Endothelial cell of umbilical vein (primary cell): ENCODE measurements at regions of chr2 and their contacts with region 1.

Region 1: DNA sequence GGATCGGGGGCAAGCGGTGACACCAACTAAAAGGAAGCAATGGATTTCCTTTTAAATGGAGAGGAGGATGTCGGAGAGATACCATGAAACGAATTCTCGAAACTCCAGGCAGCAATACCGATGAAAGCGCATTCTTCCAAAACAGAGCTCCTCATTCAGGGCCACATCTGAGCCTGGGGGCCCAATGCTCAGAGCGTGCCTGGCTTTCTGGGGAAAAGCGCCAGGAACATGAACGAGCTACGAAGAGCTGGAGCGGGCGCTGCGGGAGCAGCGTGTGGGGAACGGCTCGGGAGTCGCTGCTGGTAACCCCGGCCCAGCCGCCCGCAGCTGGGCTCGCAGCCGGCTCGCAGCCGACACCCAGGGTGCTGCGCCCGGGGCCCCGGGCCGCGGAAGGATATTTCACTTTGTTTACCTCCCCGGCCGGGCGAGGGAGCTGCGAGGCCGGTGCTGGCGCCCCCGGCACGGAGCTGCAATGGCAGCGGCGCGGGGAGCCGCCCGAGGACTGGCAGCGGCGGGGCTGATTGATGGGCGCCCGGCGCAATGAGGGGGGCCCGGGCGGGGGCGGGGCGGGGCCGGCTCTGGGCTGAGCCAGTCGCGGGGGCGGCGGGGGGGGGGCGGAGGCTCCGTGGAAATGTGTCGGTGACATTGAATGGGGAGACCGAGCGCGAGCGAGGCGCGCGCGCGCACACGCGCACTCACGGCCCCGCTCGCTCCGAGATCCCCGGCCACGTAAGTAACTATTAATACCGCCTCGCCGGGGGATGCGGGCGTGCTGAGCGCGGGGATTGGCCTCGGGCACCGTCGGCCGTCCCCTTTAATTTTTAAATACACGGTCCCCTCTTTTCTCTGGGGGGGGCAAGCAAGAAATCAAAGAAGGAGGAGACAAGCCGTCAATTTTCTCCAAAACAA is at the start of gene TRIB2:
- DNase-seq: peak; percentile 85
- H3K4me3 ChIP-seq: peak within 1 kb of the TSS; percentile 80 to 95 (median 82)
- H3K27ac ChIP-seq: peak within 1 kb of the TSS; percentile 89
- H3K4me1 ChIP-seq: peaks cover 30% of the 10 kb centered on the region
- H3K27me3 ChIP-seq: no peaks in the 10 kb centered on the region
- CTCF ChIP-seq: peak in 1 of 2 donors; percentile 1
- POLR2A ChIP-seq: peak; percentile 67
- total RNA-seq, gene TRIB2: 17.6 and 20.5 TPM in 2 replicates

Region 2: DNA sequence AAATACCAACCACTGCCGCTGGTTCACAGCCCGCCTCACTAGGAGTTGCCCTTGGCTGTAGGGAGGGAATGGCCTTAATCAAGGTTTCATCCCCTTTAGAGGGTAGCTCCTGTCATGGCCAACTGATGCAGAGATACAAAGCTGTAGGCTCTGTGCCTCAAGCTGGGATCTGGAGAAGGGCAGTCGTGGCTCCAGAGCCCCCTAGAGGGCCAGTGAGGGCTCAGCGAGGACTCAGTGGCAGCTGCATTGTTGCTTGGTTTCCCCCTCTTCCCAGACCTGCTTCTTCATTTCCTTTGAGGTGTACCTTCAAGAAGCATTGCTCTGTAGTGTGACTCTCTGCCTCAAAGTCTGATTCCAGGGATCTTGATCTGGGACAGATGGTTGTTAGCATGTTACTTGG is 668.0 kb before region 1 on chr2:
- CTCF ChIA-PET with region 1: interaction called, 3 read pairs
- POLR2A ChIA-PET with region 1: no interaction called
- dilution Hi-C with region 1: no loop called
- intact Hi-C with region 1: loop called (anchors 2 kb)
- DNase-seq: peak; percentile 4
- H3K4me3 ChIP-seq: no peak overlapping the region
- H3K27ac ChIP-seq: no peak overlapping the region
- H3K4me1 ChIP-seq: no peaks in the 10 kb centered on the region
- H3K27me3 ChIP-seq: no peaks in the 10 kb centered on the region
- CTCF ChIP-seq: peak; percentile 29 to 59
- POLR2A ChIP-seq: no peak

Region 3: GRCh38 chr2:12424809-12425208 is 291.7 kb before region 1 on chr2:
- CTCF ChIA-PET with region 1: interaction called, 10 read pairs
- POLR2A ChIA-PET with region 1: no interaction called
- dilution Hi-C with region 1: no loop called
- intact Hi-C with region 1: loop called (anchors 5 kb)
- DNase-seq: no peak
- H3K4me3 ChIP-seq: no peak overlapping the region
- H3K27ac ChIP-seq: no peak overlapping the region
- H3K4me1 ChIP-seq: no peaks in the 10 kb centered on the region
- H3K27me3 ChIP-seq: no peaks in the 10 kb centered on the region
- CTCF ChIP-seq: no peak
- POLR2A ChIP-seq: no peak

Region 4: GRCh38 chr2:12613137-12613835 is 103.2 kb before region 1 on chr2:
- CTCF ChIA-PET with region 1: interaction called, 4 read pairs
- POLR2A ChIA-PET with region 1: no interaction called
- dilution Hi-C with region 1: no loop called
- intact Hi-C with region 1: loop called (anchors 5 kb)
- DNase-seq: no peak
- H3K4me3 ChIP-seq: no peak overlapping the region
- H3K27ac ChIP-seq: no peak overlapping the region
- H3K4me1 ChIP-seq: no peaks in the 10 kb centered on the region
- H3K27me3 ChIP-seq: no peaks in the 10 kb centered on the region
- CTCF ChIP-seq: no peak
- POLR2A ChIP-seq: no peak

Region 5: DNA sequence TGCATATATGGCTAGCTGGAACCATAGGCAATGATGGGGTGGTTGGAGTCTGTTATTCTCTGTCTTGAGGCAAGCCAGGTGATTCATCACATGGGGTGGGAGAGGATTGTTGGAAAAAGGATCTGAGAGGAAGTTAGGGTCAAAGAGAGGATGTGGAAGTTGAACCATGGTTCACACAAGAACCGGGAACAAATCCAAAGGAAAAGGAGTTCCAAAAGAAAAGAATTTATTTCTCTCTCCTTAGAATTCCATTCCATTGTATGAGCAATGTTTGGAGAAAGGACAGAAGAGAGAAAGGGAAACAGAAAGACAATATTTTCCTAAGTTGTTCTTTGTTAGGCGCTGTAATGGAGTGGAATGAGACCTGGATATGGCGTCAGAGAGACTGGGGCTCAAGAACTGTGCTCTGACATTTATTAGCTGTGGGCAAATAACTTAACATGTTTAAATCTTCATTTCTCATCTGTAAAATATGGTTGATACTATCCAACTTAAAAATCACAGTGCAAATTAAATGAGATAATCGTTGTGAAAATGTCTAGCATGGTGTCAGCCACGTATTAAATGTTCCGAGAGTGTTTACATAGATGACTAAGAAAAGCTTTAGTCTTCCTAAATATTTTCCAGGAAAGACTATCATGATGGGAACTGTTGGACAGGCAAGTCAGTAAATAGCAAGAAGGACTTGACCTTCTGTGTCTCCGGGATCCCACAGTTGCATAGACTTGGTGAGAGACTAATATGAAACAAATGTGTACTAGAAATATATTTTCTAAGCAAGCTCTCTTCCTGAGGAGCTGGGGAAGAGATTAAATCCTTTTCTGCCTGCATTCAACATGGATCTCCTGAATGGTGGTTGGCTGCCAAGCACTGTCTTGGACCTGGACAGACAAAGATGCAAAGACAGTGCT is 71.6 kb after region 1 on chr2:
- CTCF ChIA-PET with region 1: interaction called, 6 read pairs
- POLR2A ChIA-PET with region 1: interaction called, 3 read pairs
- dilution Hi-C with region 1: no loop called
- intact Hi-C with region 1: loop called (anchors 1 kb)
- DNase-seq: peak; percentile 96
- H3K4me3 ChIP-seq: peak overlapping the region in 1 of 3 experiments; percentile 51
- H3K27ac ChIP-seq: peak overlapping the region; percentile 99
- H3K4me1 ChIP-seq: peaks cover 20% of the 10 kb centered on the region
- H3K27me3 ChIP-seq: no peaks in the 10 kb centered on the region
- CTCF ChIP-seq: no peak
- POLR2A ChIP-seq: no peak

Region 6: DNA sequence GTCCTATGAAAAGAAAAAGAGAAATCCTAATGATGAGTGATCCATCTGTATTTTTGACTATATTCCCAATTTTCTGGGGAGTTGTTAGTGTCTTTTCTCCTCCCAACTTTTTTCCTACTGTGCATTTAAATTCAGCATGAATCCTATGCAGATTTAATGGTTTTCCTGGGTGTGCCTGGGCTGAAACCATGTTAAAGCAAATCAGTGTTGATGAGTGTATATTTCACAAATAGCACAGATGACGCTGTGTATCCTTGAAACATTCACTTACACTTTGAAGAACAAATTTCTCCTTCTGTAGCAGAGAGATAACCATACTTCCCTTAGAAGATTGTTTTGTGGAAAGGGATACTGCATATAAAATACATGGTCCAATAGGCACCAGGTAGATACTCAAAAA is 114.5 kb after region 1 on chr2:
- CTCF ChIA-PET with region 1: no interaction called
- POLR2A ChIA-PET with region 1: no interaction called
- dilution Hi-C with region 1: no loop called
- intact Hi-C with region 1: no loop called
- DNase-seq: no peak
- H3K4me3 ChIP-seq: no peak overlapping the region
- H3K27ac ChIP-seq: no peak overlapping the region
- H3K4me1 ChIP-seq: no peaks in the 10 kb centered on the region
- H3K27me3 ChIP-seq: no peaks in the 10 kb centered on the region
- CTCF ChIP-seq: no peak
- POLR2A ChIP-seq: no peak

Region 7: GRCh38 chr2:12931186-12931844 is 214.8 kb after region 1 on chr2:
- CTCF ChIA-PET with region 1: interaction called, 172 read pairs
- POLR2A ChIA-PET with region 1: interaction called, 3 read pairs
- dilution Hi-C with region 1: no loop called
- intact Hi-C with region 1: loop called (anchors 1 kb)
- DNase-seq: peak; percentile 59
- H3K4me3 ChIP-seq: no peak overlapping the region
- H3K27ac ChIP-seq: no peak overlapping the region
- H3K4me1 ChIP-seq: peaks cover 9% of the 10 kb centered on the region
- H3K27me3 ChIP-seq: no peaks in the 10 kb centered on the region
- CTCF ChIP-seq: peak; percentile 74 to 78
- POLR2A ChIP-seq: no peak